Right ventricle myocardium inferior (tissue), 1 donor: ENCODE measurements at regions of chr1 and their contacts with region 1.

Region 1: GRCh38 chr1:10530281-10530740 is 55.6 kb downstream of the PEX14 start:
- DNase-seq: no peak
- ATAC-seq: peak; percentile 30

Region 2: GRCh38 chr1:10484521-10484920 is 45.8 kb before region 1 on chr1:
- intact Hi-C with region 1: no loop called
- DNase-seq: no peak
- ATAC-seq: no peak

Region 3: GRCh38 chr1:10646347-10646861 is 116.1 kb after region 1 on chr1:
- intact Hi-C with region 1: loop called (anchors 10 kb)
- DNase-seq: no peak
- ATAC-seq: peak; percentile 85